Activated B cell treated with CpG ODN at 0.5 μM for 24 hours (primary cell): ENCODE measurements at regions of chr21 and their contacts with region 1.

Region 1: DNA sequence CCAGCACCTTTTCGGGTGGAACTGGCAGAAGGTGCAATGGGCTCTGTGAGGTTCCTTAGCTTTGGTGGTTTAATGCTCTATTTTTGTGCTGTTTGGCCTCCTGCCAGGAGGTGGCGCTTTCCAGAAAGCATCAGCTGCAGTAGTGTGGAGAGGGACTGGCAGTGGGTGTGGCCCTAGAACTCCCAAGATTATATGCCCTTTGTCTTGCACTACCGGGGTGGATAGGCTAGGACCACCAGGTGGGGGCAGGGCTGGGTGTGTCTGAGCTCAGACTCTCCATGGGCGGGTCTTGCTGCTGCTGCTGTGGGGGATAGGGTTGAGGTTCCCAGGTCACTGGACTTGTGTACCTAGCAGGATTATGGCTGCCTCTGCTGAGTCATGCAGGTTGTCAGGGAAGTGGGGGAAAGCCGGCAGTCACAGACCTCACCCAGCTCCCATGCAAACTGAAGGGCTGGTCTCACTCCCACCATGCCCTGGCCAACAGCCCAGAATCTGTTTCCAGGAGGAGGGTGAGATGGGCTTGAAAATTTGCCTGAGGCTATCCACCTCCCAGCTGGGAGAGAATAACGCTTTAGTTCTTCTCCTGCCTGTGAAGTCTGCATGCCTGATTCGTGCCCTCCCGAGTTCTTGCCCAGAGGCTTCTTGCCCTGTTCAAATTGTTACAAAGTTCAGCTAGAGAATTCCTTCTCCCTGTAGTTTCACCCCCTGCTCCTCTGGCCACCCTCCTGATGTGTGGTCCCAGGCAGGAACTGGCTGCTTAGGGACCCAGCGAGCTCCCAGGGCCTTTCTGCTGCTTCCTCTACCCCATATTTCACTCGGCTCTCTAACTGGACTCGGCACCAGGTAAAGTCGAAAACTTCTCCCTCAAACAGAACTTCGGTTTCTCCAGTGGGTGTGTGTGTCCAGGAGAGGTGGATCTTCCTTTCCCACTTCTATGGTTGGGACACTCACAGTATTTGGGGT is 76.5 kb upstream of the BTG3 start:
- DNase-seq: peak; percentile 31
- ATAC-seq: no peak
- H3K4me3 Mint-ChIP-seq: no peak overlapping the region
- H3K27ac Mint-ChIP-seq: no peak overlapping the region
- H3K4me1 Mint-ChIP-seq: peaks cover 4% of the 10 kb centered on the region
- H3K27me3 Mint-ChIP-seq: peaks cover 8% of the 10 kb centered on the region
- CTCF ChIP-seq: no peak

Region 2: DNA sequence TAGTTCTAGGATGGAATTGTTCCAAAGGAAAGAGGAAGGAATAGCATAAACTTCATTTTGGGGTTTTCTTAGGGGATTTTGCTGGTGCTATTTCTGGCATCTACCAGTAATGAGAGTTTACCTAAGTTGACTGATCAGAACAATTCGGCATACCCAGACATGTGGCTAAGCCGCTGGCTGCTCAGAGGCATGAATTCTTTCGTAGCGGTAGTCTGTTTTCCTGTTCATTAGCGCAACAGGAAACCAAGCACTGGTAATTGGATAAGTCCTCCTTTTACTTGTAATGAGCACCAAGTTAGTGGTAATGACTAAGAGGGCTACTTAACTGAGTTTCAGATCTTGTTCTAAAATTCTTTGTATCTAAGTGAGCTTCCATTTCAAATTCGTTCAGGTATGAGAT is 91.3 kb after region 1 on chr21:
- CTCF ChIA-PET with region 1: interaction called, 4 read pairs
- POLR2A ChIA-PET with region 1: no interaction called
- intact Hi-C with region 1: loop called (anchors 2 kb)
- DNase-seq: no peak
- ATAC-seq: peak; percentile 45
- H3K4me3 Mint-ChIP-seq: peak overlapping the region; percentile 55
- H3K27ac Mint-ChIP-seq: peak overlapping the region; percentile 75
- H3K4me1 Mint-ChIP-seq: peaks cover 81% of the 10 kb centered on the region
- H3K27me3 Mint-ChIP-seq: no peaks in the 10 kb centered on the region
- CTCF ChIP-seq: no peak

Region 3: DNA sequence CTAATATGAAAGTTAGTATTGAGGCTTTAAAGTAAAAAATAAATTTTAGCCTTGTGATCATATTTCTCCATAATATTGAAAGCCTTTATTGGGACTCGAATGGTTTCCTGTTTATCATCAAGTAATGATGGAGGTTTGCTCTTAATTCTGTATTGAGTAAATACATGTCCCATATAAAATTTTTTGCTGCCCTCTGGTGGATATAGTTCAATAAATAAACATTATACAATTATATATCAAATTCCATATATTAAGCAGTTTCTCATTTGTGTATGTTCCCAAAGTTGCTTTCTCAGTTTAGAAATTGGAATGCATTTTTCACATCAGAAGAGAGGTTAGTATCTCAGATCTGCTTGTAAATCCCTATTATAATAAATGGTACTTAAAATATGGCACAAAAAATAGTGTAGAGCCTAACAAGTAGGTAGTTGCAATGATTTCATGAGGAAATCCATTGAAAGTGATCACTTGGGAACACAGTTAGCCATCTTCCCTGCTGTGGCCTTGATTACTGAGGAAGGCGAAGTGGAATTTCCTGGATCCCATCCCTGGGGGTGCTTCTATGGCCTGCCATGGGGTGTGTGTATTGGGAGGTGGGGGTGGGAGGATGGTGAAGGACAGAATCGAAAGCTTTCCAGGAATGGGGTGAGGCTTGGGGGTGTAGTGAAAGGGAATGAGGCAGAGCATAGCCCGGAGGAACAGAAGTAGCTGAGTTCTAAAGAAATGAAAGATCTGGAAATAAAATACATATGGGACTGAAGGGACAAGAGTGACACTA is 214.0 kb after region 1 on chr21:
- CTCF ChIA-PET with region 1: interaction called, 18 read pairs
- POLR2A ChIA-PET with region 1: no interaction called
- intact Hi-C with region 1: loop called (anchors 1 kb)
- DNase-seq: no peak
- ATAC-seq: peak; percentile 37
- H3K4me3 Mint-ChIP-seq: no peak overlapping the region
- H3K27ac Mint-ChIP-seq: no peak overlapping the region
- H3K4me1 Mint-ChIP-seq: peaks cover 6% of the 10 kb centered on the region
- H3K27me3 Mint-ChIP-seq: no peaks in the 10 kb centered on the region
- CTCF ChIP-seq: no peak

Region 4: DNA sequence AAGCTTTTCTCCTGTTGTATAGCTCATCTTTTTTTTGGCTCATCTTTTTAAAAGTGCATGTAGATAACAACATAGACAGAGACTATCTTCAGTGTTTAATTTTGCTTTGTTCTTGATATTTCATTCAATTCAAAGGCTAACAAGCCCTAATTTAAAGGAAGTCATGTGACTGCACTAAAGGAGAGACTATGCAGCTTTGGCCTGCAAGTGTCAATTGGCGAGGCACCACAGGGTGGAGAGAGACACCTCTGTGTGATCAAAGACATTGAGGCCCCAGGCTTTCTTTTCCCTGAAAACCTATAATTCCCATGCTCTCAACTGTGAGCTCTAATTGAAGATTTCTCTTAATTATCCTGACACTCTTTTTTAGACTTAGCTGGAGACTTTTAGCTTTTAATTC is 609.0 kb after region 1 on chr21:
- CTCF ChIA-PET with region 1: no interaction called
- POLR2A ChIA-PET with region 1: no interaction called
- intact Hi-C with region 1: loop called (anchors 10 kb)
- DNase-seq: no peak
- ATAC-seq: no peak
- H3K4me3 Mint-ChIP-seq: no peak overlapping the region
- H3K27ac Mint-ChIP-seq: no peak overlapping the region
- H3K4me1 Mint-ChIP-seq: no peaks in the 10 kb centered on the region
- H3K27me3 Mint-ChIP-seq: no peaks in the 10 kb centered on the region
- CTCF ChIP-seq: no peak